ENCODE measurements at regions of chr2 and their contacts with region 1.

Region 1: GRCh38 chr2:160918906-160919503 is 241.2 kb upstream of the TANK start:
- DNase-seq: peak; percentile 54
- H3K4me3 ChIP-seq: no peak overlapping the region
- H3K27ac ChIP-seq: no peak overlapping the region
- H3K4me1 ChIP-seq: peaks cover 2% of the 10 kb centered on the region
- H3K27me3 ChIP-seq: no peaks in the 10 kb centered on the region
- CTCF ChIP-seq: peak; percentile 54 to 79

Region 2: GRCh38 chr2:160252278-160252887 is 666.6 kb before region 1 on chr2:
- CTCF ChIA-PET with region 1: no interaction called
- dilution Hi-C with region 1: no loop called
- in situ Hi-C with region 1: no loop called
- intact Hi-C with region 1: loop called (anchors 5 kb)
- DNase-seq: no peak
- H3K4me3 ChIP-seq: no peak overlapping the region
- H3K27ac ChIP-seq: no peak overlapping the region
- H3K4me1 ChIP-seq: peaks cover 16% of the 10 kb centered on the region
- H3K27me3 ChIP-seq: no peaks in the 10 kb centered on the region
- CTCF ChIP-seq: peak; percentile 76 to 83

Region 3: DNA sequence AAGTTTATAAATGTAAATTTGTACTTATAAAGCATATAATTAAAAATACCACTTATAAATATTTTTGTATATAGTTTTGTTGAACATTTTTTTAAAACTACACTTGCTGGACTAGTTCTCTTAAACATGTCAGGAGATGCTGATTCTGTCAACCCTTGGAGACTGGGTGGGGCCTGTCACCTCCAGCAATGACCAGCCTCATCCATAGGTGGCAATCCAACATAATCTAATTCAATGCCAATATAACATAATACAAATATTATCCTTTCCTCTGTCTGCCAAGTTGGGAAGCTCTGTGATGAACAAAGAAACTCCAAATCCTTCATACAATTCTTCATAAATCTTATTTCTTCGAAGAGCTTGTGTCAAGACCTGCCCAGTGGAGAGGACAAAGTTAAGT is 565.8 kb before region 1 on chr2:
- CTCF ChIA-PET with region 1: no interaction called
- dilution Hi-C with region 1: no loop called
- in situ Hi-C with region 1: no loop called
- intact Hi-C with region 1: loop called (anchors 5 kb)
- DNase-seq: no peak
- H3K4me3 ChIP-seq: no peak overlapping the region
- H3K27ac ChIP-seq: peak overlapping the region; percentile 53
- H3K4me1 ChIP-seq: peaks cover 28% of the 10 kb centered on the region
- H3K27me3 ChIP-seq: no peaks in the 10 kb centered on the region
- CTCF ChIP-seq: peak in 1 of 2 donors; percentile 51

Region 4: GRCh38 chr2:160429248-160430000 is 489.6 kb before region 1 on chr2:
- CTCF ChIA-PET with region 1: interaction called, 3 read pairs
- dilution Hi-C with region 1: no loop called
- in situ Hi-C with region 1: no loop called
- intact Hi-C with region 1: loop called (anchors 1 kb)
- DNase-seq: peak; percentile 42
- H3K4me3 ChIP-seq: no peak overlapping the region
- H3K27ac ChIP-seq: peak overlapping the region; percentile 11
- H3K4me1 ChIP-seq: peaks cover 47% of the 10 kb centered on the region
- H3K27me3 ChIP-seq: no peaks in the 10 kb centered on the region
- CTCF ChIP-seq: peak; percentile 46 to 57